Activated CD4-positive, alpha-beta memory T cell treated with anti-CD3 and anti-CD28 coated beads for 36 hours (primary cell): ENCODE measurements at regions of chr14 and their contacts with region 1.

Region 1: GRCh38 chr14:69666690-69667239 is 55.4 kb downstream of the SUSD6 start:
- DNase-seq: no peak
- H3K4me3 Mint-ChIP-seq: peak overlapping the region; percentile 56
- H3K27ac Mint-ChIP-seq: peak overlapping the region; percentile 93
- H3K4me1 Mint-ChIP-seq: peaks cover 96% of the 10 kb centered on the region
- H3K27me3 Mint-ChIP-seq: no peaks in the 10 kb centered on the region

Region 2: DNA sequence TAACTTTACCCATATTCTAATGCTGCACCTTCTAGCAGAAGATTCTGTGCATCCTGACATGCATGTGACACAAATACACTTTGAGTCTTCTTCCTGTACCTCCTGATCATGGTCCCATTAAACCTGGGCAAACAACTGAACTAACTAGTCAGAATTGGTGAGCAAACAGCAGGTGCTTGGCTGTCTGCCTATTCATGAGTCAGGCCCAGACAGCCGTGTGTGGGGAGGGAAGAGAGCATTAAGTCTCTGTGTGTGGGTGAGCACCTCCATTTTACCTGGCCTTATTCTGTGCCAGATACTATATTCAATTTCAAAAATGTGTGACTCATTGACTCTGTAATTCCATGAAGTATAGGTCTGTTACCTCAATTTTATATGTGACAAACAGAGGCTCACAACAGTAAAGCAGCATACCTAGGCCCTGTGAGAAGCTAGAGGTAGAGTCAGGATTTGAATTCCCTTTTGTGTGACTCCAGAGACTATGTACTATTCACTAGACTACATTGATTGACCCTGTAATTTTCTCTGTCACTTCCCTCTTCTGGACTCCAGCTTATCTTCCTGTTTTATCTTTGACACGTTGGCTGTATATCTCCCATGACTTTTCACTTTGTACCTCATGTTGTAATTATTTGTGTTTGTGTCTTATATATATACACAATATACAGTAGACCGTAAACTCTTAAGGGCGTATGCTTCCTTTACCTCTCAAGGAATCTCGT is 23.2 kb before region 1 on chr14:
- CTCF ChIA-PET with region 1: interaction called, 4 read pairs
- POLR2A ChIA-PET with region 1: interaction called, 8 read pairs
- intact Hi-C with region 1: loop called (anchors 2 kb)
- DNase-seq: peak; percentile 89
- H3K4me3 Mint-ChIP-seq: peak overlapping the region; percentile 37
- H3K27ac Mint-ChIP-seq: peak overlapping the region; percentile 93
- H3K4me1 Mint-ChIP-seq: peaks cover 86% of the 10 kb centered on the region
- H3K27me3 Mint-ChIP-seq: no peaks in the 10 kb centered on the region